CD4-positive, alpha-beta memory T cell (primary cell): ENCODE measurements at regions of chr4 and their contacts with region 1.

Region 1: GRCh38 chr4:56387023-56388001 is at the start of gene AASDH:
- DNase-seq: peak; percentile 94 to 96 (median 95)
- H3K4me3 ChIP-seq: peak within 1 kb of the TSS; percentile 63 to 94
- H3K4me3 Mint-ChIP-seq: peak within 1 kb of the TSS; percentile 91 to 100 (median 96)
- H3K27ac ChIP-seq: peak within 1 kb of the TSS; percentile 81
- H3K27ac Mint-ChIP-seq: peak within 1 kb of the TSS; percentile 98 to 100 (median 99)
- H3K4me1 ChIP-seq: peaks cover 20% of the 10 kb centered on the region
- H3K4me1 Mint-ChIP-seq: peaks cover 21 to 48% (median 37%) of the 10 kb centered on the region in 4 donors
- H3K27me3 ChIP-seq: no peaks in the 10 kb centered on the region
- H3K27me3 Mint-ChIP-seq: no peaks in the 10 kb centered on the region
- total RNA-seq, gene AASDH: 19.2 to 23.7 TPM

Region 2: GRCh38 chr4:56505269-56506130 is 118.2 kb after region 1 on chr4 and contains the start of gene ARL9:
- CTCF ChIA-PET with region 1: no interaction called
- POLR2A ChIA-PET with region 1: no interaction called
- intact Hi-C with region 1: loop called (anchors 1 kb)
- DNase-seq: peak; percentile 56 to 74 (median 68)
- H3K4me3 ChIP-seq: peak within 1 kb of the TSS; percentile 28 to 42
- H3K4me3 Mint-ChIP-seq: peak within 1 kb of the TSS; percentile 77 to 91 (median 84)
- H3K27ac ChIP-seq: peak within 1 kb of the TSS; percentile 29
- H3K27ac Mint-ChIP-seq: peak within 1 kb of the TSS; percentile 2 to 94 (median 86)
- H3K4me1 ChIP-seq: peaks cover 10% of the 10 kb centered on the region
- H3K4me1 Mint-ChIP-seq: peaks cover 8 to 21% (median 11%) of the 10 kb centered on the region in 4 donors
- H3K27me3 ChIP-seq: no peaks in the 10 kb centered on the region
- H3K27me3 Mint-ChIP-seq: no peaks in the 10 kb centered on the region
- total RNA-seq, gene ARL9: 0.35 TPM in 1 of 2 experiments, not detected in the other

Region 3: GRCh38 chr4:56530269-56531148 is 143.2 kb after region 1 on chr4:
- CTCF ChIA-PET with region 1: no interaction called
- POLR2A ChIA-PET with region 1: interaction called, 5 read pairs
- intact Hi-C with region 1: loop called (anchors 1 kb)
- DNase-seq: peak; percentile 60 to 80 (median 63)
- H3K4me3 ChIP-seq: peak overlapping the region; percentile 48 to 57
- H3K4me3 Mint-ChIP-seq: no peak overlapping the region
- H3K27ac ChIP-seq: no peak overlapping the region
- H3K27ac Mint-ChIP-seq: peak overlapping the region in 6 of 7 donors; percentile 14 to 69 (median 40)
- H3K4me1 ChIP-seq: peaks cover 11% of the 10 kb centered on the region
- H3K4me1 Mint-ChIP-seq: no peaks in the 10 kb centered on the region
- H3K27me3 ChIP-seq: no peaks in the 10 kb centered on the region
- H3K27me3 Mint-ChIP-seq: peaks cover 7 to 9% of the 10 kb centered on the region in 2 donors